GM10248 (cell line): ENCODE measurements at regions of chr5 and their contacts with region 1.

Region 1: GRCh38 chr5:159003037-159004030 is 96.4 kb downstream of the EBF1 start:
- DNase-seq: no peak
- CTCF ChIP-seq: no peak

Region 2: DNA sequence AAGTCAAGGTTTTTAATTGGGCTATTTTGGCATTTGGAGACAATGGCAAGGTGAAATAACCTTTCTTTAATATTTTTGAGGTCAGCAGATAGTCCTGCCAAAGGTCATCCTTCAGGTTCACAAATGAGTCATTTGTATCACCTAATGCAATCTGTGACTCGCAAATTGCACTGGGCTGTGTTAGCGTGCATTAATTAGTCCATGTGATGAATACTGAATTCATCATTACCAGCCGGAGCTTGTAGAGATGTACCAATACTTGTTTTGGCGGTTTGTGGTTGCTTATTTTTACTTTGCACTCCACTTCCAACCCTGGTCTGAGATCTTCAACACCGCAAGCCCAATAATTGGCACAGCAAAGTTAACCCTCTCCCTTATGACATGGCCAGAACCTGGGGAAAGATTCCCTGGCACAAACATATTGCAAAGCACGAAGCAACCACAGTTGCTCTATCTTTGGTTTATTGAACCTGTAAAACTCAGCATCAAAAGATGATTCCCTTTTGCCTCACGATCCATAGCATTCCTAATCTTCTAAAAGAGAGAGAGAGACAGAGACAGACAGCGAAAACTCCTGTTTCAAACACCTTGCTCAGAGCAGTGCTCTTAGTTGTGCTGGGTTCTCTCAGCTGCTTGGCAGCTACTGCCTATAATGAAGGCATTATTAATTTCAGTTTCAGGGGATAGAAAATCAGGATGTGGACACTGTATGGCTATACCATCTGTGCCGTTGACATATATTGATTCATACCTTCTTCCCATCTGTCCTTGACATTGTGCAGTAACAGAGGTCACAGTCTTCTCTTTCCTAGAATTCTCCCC is 81.7 kb before region 1 on chr5:
- CTCF ChIA-PET with region 1: no interaction called
- POLR2A ChIA-PET with region 1: no interaction called
- DNase-seq: no peak
- CTCF ChIP-seq: no peak

Region 3: DNA sequence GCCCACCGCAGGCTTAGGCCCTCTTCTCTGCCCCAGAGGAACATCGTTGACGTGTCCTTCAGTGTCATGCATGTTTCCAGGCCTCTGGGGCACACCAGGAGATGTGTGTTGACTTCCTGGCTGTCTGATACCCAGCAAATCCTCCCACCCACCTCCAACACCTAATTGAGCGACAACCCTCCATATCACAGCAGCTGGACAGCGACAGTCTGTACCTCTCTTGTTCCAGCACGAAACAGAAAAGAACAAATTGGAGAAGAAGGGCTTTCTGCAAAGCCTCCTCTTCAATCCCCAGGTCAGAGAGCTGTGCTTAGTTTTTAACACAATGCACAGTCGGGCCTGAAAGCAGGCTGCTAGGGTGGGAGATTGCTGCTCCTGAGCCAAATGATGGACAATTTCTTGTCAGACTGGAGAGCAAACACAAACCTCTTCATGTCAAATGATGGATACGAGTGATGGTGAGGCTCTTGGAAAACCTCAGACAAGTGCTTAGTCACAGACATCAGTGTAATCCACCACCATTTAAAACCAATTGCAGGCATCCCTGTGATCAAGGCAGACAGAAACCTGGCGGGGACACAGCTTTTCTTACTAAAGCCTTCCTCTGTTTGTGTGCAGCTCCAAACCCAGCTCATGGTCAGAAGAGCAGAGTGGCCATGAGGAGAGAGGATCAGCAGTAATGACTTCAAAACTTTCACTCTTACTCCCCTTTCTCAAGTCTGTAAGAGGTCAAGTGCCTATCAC is 14.2 kb before region 1 on chr5:
- CTCF ChIA-PET with region 1: interaction called, 18 read pairs
- POLR2A ChIA-PET with region 1: no interaction called
- DNase-seq: no peak
- CTCF ChIP-seq: no peak